Activated CD4-positive, alpha-beta T cell treated with anti-CD3 and anti-CD28 coated beads for 36 hours (primary cell): ENCODE measurements at regions of chr16 and their contacts with region 1.

Region 1: GRCh38 chr16:71214746-71215381 is 15.7 kb downstream of the HYDIN start:
- DNase-seq: no peak
- ATAC-seq: no peak
- H3K4me3 Mint-ChIP-seq: no peak overlapping the region
- H3K27ac Mint-ChIP-seq: no peak overlapping the region
- H3K4me1 Mint-ChIP-seq: no peaks in the 10 kb centered on the region
- H3K27me3 Mint-ChIP-seq: peaks cover 18% of the 10 kb centered on the region

Region 2: DNA sequence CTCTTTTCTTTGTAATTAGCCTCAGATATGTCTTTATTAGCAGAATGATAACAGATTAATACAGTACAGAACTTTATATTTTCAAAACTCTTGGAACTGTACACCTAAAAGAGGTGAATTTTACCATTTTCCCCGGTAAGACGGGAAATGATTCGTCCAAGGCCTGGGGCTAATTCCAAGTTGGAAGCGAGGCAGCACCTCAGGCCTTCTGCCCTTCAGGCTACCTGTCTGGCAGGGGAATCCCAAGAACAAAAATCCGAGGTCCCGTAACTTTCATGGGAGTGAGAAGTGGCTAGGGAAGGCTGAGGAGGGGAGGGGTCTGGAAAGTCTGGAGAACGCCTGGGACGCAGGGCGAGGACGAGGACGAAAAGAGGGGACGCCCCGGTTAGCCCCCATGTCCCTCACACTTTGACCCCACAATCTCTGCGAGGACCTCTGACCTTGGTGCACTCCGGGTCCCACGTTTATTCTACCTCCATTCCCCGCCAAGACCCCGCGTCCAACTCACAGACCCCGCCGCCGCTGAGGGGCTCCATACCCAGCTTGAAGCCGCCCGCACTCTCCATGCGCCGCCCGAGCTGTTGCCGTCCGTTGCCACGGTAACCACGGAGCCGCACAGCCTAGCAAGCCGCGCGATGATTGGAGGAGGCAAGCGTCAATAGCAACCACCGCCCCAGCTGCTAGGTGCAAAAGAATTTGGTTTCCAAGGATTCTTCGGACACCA is 15.4 kb after region 1 on chr16 and contains the start of gene HYDIN:
- CTCF ChIA-PET with region 1: no interaction called
- POLR2A ChIA-PET with region 1: no interaction called
- intact Hi-C with region 1: no loop called
- DNase-seq: peak; percentile 67
- ATAC-seq: peak; percentile 47
- H3K4me3 Mint-ChIP-seq: no peak within 1 kb of the TSS
- H3K27ac Mint-ChIP-seq: no peak within 1 kb of the TSS
- H3K4me1 Mint-ChIP-seq: no peaks in the 10 kb centered on the region
- H3K27me3 Mint-ChIP-seq: peaks cover 35% of the 10 kb centered on the region
- total RNA-seq, gene HYDIN: 0.32 TPM in 1 of 2 experiments, not detected in the other

Region 3: GRCh38 chr16:71311553-71312158 is 96.8 kb after region 1 on chr16:
- CTCF ChIA-PET with region 1: no interaction called
- POLR2A ChIA-PET with region 1: no interaction called
- intact Hi-C with region 1: loop called in 1 of 2 experiments (anchors 2 kb)
- DNase-seq: peak; percentile 31
- ATAC-seq: no peak
- H3K4me3 Mint-ChIP-seq: no peak overlapping the region
- H3K27ac Mint-ChIP-seq: no peak overlapping the region
- H3K4me1 Mint-ChIP-seq: no peaks in the 10 kb centered on the region
- H3K27me3 Mint-ChIP-seq: peaks cover 35% of the 10 kb centered on the region

Region 4: DNA sequence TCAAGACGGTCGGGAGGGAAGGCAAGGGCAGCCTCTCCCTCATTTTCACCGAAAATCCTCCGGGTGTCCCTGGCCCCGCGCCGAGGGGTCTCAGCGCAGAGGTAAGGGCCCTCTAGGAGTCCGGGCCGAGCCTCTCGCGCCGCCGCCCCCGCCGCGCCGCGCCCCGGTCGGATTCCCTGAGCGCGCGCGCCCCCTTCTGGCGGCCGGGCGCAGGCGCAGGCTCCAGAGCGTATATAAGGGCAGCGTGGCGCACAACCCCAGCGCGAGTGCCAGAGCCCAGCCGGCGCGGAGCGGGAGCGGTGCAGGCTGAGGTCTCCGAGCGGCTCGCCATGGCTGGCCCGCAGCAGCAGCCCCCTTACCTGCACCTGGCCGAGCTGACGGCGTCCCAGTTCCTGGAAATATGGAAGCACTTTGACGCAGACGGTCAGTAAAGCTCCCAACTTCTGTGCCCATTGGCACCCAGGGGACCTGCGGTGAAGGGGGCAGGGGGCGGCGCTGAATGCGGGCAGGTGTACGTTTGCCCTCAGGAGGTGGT is 143.7 kb after region 1 on chr16 and contains the start of gene CALB2:
- CTCF ChIA-PET with region 1: no interaction called
- POLR2A ChIA-PET with region 1: no interaction called
- intact Hi-C with region 1: loop called in 1 of 2 experiments (anchors 10 kb)
- DNase-seq: peak; percentile 82
- ATAC-seq: peak; percentile 98
- H3K4me3 Mint-ChIP-seq: no peak within 1 kb of the TSS
- H3K27ac Mint-ChIP-seq: no peak within 1 kb of the TSS
- H3K4me1 Mint-ChIP-seq: no peaks in the 10 kb centered on the region
- H3K27me3 Mint-ChIP-seq: peaks cover 8% of the 10 kb centered on the region
- total RNA-seq, gene CALB2: not detected